ENCODE measurements at regions of chr15 and their contacts with region 1.

Region 1: DNA sequence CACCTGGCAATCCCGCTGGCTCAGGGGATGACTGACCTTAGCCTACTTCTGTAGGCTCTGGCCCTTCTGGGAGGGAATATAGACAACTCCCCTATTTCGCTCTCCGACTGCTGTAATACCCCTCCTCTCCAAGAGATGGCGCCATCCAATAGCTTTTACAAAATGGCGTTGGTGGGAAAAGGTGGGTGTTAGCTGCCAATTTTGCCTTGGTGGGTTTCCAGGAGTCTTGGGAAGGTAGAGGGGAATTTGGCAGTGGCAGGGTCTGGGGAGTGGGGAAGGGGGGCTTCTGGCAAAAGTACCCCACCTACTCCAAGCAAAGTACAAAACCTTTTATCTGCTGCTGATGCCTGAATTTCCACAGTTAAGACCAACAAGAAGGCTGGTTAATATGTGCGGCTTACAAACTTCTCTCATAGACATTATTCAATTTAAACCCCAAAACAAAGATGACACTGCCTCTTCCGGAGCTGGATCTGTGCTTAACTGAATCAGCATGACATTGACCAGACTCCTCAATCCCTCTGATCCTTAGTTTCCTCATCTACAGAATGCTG is 62.1 kb downstream of the RASGRF1 start:
- DNase-seq: peak; percentile 73
- CTCF ChIP-seq: peak; percentile 87

Region 2: DNA sequence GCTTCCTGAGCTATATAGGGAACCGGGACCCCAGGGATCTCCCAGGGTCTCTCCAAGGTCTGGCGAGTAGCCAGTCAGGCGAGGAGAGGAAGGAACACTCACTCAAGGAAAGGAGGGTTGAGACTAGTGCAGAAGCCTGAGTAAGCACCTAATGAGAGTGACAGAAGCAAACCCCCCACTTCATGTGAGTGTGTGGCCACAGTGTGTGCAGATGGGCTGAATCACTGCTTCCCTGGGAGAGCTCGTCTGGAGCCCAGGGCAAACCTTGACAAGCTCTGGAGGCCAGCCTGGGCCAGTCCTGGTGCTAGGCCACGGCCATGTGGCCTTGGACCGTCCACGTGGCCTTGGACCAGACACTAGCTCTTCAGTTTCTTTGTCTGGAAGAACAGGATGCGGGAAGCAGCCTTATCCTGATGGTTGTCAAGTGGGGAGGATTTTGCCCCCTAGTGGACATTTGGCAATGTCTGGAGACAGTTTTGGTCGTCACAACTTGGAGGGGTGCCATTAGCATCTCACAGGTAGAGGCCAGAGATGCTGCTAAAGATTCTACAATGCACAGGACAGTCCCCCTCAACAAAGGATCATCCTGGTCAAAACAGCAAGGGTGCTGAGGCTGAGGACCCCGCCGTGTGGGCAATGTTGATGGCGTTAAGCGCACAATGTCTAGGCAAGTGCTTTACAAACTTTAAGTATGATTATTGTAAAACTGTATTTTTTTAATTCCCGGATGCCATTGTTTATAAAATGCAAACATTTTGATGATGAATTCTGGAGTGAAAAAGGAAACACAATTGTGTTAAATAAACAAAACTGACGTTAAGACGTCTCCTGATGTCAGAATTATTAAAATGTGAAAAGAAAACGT is 48.8 kb before region 1 on chr15:
- CTCF ChIA-PET with region 1: interaction called, 10 read pairs
- POLR2A ChIA-PET with region 1: no interaction called
- DNase-seq: peak; percentile 64
- CTCF ChIP-seq: peak; percentile 57

Region 3: DNA sequence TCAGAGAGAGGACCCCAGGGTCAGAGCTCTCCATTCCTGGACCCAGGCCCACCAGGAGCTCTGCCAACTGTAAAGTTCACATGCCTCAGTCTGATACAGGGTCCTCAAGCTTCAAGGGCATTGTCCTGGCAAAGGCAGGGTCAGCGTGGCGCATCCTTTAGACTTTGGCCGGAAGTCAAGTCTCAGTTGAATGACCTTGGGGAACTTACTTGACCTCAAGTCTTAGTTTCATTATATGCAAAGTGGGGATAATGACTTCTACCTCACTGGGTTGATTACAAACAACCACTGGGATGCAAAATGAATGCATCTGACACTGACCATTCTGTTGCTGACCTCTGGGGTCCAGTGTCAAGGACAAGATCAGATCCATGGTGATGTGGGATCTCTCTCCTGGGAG is 13.1 kb before region 1 on chr15:
- CTCF ChIA-PET with region 1: interaction called, 14 read pairs
- POLR2A ChIA-PET with region 1: no interaction called
- DNase-seq: no peak
- CTCF ChIP-seq: no peak

Region 4: GRCh38 chr15:79049416-79049815 is 20.9 kb after region 1 on chr15:
- CTCF ChIA-PET with region 1: interaction called, 17 read pairs
- POLR2A ChIA-PET with region 1: no interaction called
- DNase-seq: no peak
- CTCF ChIP-seq: no peak

Region 5: DNA sequence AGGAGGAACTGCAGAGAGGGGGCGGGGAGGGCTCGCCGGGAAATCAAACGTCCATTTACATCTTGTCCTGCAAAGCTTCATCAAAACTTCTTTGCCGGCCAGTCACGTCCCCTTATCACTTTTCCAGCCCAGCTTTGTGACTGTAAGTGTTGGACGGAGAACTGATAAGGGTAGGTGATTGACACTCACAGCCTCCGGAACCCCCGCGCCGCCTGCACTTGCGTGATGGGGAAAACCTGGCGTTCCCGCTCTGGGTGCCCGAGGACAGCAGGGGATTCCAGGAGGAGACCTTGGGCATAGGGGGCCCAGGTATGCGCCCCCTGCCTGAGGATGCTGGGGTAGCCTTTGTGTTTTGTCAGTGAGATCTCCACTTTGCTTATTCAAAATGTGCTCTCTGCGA is 181.2 kb after region 1 on chr15:
- CTCF ChIA-PET with region 1: interaction called, 23 read pairs
- POLR2A ChIA-PET with region 1: no interaction called
- DNase-seq: no peak
- CTCF ChIP-seq: no peak

Measured in GM10248 (cell line).